ENCODE measurements at regions of chr1 and their contacts with region 1.

Region 1: DNA sequence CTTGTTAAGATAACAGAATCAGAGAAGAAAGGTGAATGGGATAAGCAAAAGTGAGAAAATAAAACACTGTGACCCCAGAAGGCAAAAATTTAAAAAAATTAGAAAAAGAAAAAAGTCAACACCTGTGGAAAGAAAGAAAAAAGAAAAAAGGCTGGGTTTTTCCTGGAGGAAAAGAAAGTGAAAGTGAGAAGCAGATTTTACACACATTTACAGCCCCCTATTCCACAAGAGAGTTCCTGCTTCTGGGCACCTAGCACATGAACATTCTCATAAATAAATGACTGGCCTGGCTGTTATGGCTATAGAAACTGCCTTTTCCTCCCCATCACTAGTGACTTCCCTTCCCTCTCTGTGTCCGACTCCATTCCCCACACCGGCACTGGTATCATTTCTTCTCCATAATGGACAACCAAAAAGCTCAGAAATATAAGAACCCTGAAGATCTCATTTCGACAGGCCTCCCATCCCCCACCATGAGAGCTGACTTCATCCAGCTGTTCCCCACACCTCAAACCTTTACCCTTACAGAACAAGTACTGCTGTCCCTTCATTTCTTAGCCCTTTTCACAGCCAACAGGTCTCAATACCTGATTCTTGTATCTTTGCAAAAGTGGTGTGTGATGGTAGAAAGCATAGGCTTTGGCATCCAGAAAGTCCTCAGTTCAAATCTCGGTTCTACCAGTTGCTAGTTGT is 12.6 kb downstream of the MTF1 start:
- DNase-seq: peak; percentile 22
- ATAC-seq: peak; percentile 19
- H3K4me3 Mint-ChIP-seq: peak overlapping the region; percentile 57
- H3K27ac Mint-ChIP-seq: peak overlapping the region; percentile 86
- H3K4me1 Mint-ChIP-seq: peaks cover 48% of the 10 kb centered on the region
- H3K27me3 Mint-ChIP-seq: no peaks in the 10 kb centered on the region

Region 2: GRCh38 chr1:37782491-37782890 is 64.3 kb before region 1 on chr1:
- CTCF ChIA-PET with region 1: no interaction called
- POLR2A ChIA-PET with region 1: interaction called, 11 read pairs
- intact Hi-C with region 1: no loop called
- DNase-seq: no peak
- ATAC-seq: no peak
- H3K4me3 Mint-ChIP-seq: no peak overlapping the region
- H3K27ac Mint-ChIP-seq: no peak overlapping the region
- H3K4me1 Mint-ChIP-seq: peaks cover under 1% of the 10 kb centered on the region
- H3K27me3 Mint-ChIP-seq: peaks cover 19% of the 10 kb centered on the region

Region 3: GRCh38 chr1:37859507-37860345 is 12.9 kb after region 1 on chr1 and contains the start of gene MTF1:
- CTCF ChIA-PET with region 1: interaction called, 10 read pairs
- POLR2A ChIA-PET with region 1: no interaction called
- intact Hi-C with region 1: no loop called
- DNase-seq: peak; percentile 98
- ATAC-seq: peak; percentile 98
- H3K4me3 Mint-ChIP-seq: peak within 1 kb of the TSS; percentile 87
- H3K27ac Mint-ChIP-seq: peak within 1 kb of the TSS; percentile 93
- H3K4me1 Mint-ChIP-seq: peaks cover 40% of the 10 kb centered on the region
- H3K27me3 Mint-ChIP-seq: no peaks in the 10 kb centered on the region
- total RNA-seq, gene MTF1: 16.1 to 23.8 TPM

Region 4: GRCh38 chr1:38046884-38047602 is 200.2 kb after region 1 on chr1:
- CTCF ChIA-PET with region 1: no interaction called
- POLR2A ChIA-PET with region 1: no interaction called
- intact Hi-C with region 1: no loop called
- DNase-seq: peak; percentile 82
- ATAC-seq: peak; percentile 87
- H3K4me3 Mint-ChIP-seq: peak overlapping the region; percentile 64
- H3K27ac Mint-ChIP-seq: no peak overlapping the region
- H3K4me1 Mint-ChIP-seq: peaks cover 11% of the 10 kb centered on the region
- H3K27me3 Mint-ChIP-seq: peaks cover 41% of the 10 kb centered on the region